AG04449 (cell line): ENCODE measurements at regions of chr12 and their contacts with region 1.

Region 1: GRCh38 chr12:11581179-11581755 is 68.2 kb upstream of the ETV6 start:
- DNase-seq: no peak
- H3K4me3 ChIP-seq: no peak overlapping the region
- CTCF ChIP-seq: peak; percentile 15

Region 2: DNA sequence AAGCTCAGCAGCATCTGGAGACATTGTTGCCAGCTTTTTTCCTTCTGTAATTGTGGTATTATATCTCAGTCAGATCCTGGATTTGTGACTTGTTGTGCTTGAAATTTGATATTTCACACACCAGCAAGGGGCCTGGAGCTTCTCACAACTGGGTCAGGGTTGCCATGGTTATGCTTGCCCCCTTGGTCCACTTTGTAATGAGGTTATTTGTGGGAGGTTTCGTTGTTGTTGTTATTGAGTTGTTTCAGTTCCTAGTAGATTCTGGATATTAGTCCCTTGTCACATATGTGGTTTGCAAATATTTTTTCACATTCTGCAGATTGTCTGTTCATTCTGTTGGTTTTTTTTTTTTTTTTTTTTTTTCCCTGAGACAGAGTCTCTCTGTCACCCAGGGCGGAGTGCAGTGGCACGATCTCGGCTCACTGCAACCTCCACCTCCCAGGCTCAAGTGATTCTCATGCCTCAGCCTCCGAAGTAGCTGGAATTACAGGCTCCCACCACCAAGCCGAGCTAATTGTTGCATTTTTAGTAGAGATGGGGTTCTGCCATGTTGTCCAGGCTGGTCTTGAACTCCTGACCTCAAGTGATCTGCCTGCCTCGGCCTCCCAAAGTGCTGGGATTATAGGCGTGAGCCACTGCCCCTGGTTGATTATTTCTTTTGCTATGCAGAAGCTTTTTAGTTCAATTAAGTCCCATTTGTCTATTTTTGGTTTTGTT is 12.3 kb before region 1 on chr12:
- CTCF ChIA-PET with region 1: interaction called, 22 read pairs
- POLR2A ChIA-PET with region 1: no interaction called
- DNase-seq: no peak
- H3K4me3 ChIP-seq: no peak overlapping the region
- CTCF ChIP-seq: no peak

Region 3: DNA sequence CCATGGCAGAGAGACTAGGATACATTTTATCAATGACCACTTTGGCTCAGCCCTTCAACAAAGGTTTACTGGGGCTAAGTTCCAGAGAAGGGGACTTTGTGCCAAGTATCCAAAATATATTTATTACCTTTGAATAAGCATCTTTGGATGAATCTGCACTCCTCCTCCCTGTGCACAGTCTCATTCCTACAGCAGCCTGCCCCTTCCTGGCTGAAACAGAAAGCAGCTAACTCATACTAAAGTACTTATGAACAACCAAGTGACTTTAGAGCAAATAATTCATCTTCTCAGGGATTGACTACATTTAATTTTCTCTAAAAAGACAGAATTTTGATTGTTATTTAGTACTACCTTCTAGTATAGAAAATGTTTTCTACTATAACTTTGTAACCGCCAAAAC is 20.4 kb after region 1 on chr12:
- CTCF ChIA-PET with region 1: interaction called, 15 read pairs
- POLR2A ChIA-PET with region 1: no interaction called
- DNase-seq: no peak
- H3K4me3 ChIP-seq: no peak overlapping the region
- CTCF ChIP-seq: no peak

Region 4: GRCh38 chr12:11780521-11781101 is 199.3 kb after region 1 on chr12:
- CTCF ChIA-PET with region 1: interaction called, 12 read pairs
- POLR2A ChIA-PET with region 1: no interaction called
- DNase-seq: no peak
- H3K4me3 ChIP-seq: no peak overlapping the region
- CTCF ChIP-seq: no peak

Region 5: DNA sequence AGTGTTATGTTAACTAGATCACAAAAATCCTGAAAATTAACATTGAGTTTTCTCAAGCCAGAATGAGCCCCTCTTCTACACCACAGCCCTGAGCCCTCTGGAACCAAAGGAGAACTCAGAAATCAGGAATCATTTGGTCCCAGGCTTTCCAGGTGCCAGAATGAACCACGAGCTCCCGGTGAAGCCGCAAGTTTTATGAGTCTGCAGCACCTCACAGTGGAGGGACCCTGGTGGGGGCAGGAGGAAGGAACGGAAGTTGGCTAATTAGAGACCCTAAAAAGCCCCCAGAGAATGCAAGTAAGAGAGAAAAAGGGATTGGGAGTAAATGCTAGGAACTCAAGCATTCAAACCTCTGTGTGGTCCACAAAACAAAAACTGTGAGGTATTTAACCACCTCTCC is 436.5 kb after region 1 on chr12:
- CTCF ChIA-PET with region 1: interaction called, 15 read pairs
- POLR2A ChIA-PET with region 1: no interaction called
- DNase-seq: no peak
- H3K4me3 ChIP-seq: no peak overlapping the region
- CTCF ChIP-seq: peak; percentile 9

Region 6: GRCh38 chr12:12039897-12040296 is 458.6 kb after region 1 on chr12:
- CTCF ChIA-PET with region 1: interaction called, 180 read pairs
- POLR2A ChIA-PET with region 1: no interaction called
- DNase-seq: no peak
- H3K4me3 ChIP-seq: no peak overlapping the region
- CTCF ChIP-seq: no peak